ENCODE measurements at regions of chr5 and their contacts with region 1.

Region 1: GRCh38 chr5:97009212-97009898 is 73.5 kb downstream of the LNPEP start:
- DNase-seq: peak in 1 of 2 donors; percentile 9
- ATAC-seq: peak in 7 of 8 donors; percentile 52 to 76 (median 69)
- H3K4me3 ChIP-seq: no peak overlapping the region
- H3K27ac ChIP-seq: peak overlapping the region in 5 of 10 donors; percentile 2 to 35 (median 23)
- H3K4me1 ChIP-seq: peaks cover 0 to 19% (median 11%) of the 10 kb centered on the region in 9 donors
- H3K27me3 ChIP-seq: no peaks in the 10 kb centered on the region
- CTCF ChIP-seq: no peak

Region 2: GRCh38 chr5:96388176-96388575 is 621.2 kb before region 1 on chr5:
- intact Hi-C with region 1: loop called in 1 of 10 experiments (anchors 5 kb)
- DNase-seq: no peak
- ATAC-seq: no peak
- H3K4me3 ChIP-seq: no peak overlapping the region
- H3K27ac ChIP-seq: no peak overlapping the region
- H3K4me1 ChIP-seq: peaks cover 0 to 27% (median 0%) of the 10 kb centered on the region in 9 donors
- H3K27me3 ChIP-seq: no peaks in the 10 kb centered on the region
- CTCF ChIP-seq: no peak

Region 3: GRCh38 chr5:96868603-96869371 is 140.6 kb before region 1 on chr5:
- intact Hi-C with region 1: loop called in 2 of 10 experiments (anchors 10 kb)
- DNase-seq: peak in 1 of 2 donors; percentile 36
- ATAC-seq: peak; percentile 67 to 92 (median 87)
- H3K4me3 ChIP-seq: no peak overlapping the region
- H3K27ac ChIP-seq: no peak overlapping the region
- H3K4me1 ChIP-seq: no peaks in the 10 kb centered on the region
- H3K27me3 ChIP-seq: no peaks in the 10 kb centered on the region
- CTCF ChIP-seq: peak; percentile 75 to 95 (median 86)

Region 4: DNA sequence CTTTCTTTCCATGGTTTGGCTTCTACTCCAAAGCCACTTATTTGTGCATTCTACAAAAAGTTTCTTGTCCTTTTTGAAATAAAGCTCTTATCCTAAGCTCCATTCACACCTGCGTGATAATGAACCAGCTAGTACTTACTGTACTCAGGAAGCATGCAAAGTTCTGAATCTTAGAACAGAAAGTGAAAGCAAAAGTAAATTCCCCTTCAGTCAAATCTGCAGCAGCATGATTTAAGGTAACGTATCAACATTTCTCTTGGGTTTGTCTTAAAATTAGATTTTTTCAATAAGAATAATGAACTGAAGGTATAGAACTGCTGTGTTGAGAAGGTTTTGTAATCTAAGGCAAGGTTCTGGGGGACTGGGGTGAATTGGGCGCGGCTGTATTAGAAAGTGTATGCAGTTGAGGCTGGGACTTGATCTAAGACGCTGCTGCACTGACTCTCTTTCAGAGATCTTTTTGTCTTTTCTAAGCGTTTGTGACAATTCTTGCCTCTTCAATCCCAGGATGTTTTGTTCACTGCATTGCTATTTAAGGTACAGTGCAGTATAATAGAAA is 133.0 kb before region 1 on chr5 and contains the start of gene ERAP2:
- intact Hi-C with region 1: loop called in 1 of 10 experiments (anchors 10 kb)
- DNase-seq: no peak
- ATAC-seq: peak in 7 of 8 donors; percentile 67 to 88 (median 81)
- H3K4me3 ChIP-seq: peak within 1 kb of the TSS; percentile 34 to 78 (median 67)
- H3K27ac ChIP-seq: peak within 1 kb of the TSS in 9 of 10 donors; percentile 57 to 90 (median 79)
- H3K4me1 ChIP-seq: peaks cover 0 to 49% (median 10%) of the 10 kb centered on the region in 9 donors
- H3K27me3 ChIP-seq: no peaks in the 10 kb centered on the region
- CTCF ChIP-seq: no peak
- total RNA-seq, gene ERAP2: 0.92 to 29.7 (median 5.9) TPM

Region 5: GRCh38 chr5:97131139-97131710 is 121.9 kb after region 1 on chr5:
- intact Hi-C with region 1: loop called in 1 of 10 experiments (anchors 10 kb)
- DNase-seq: no peak
- ATAC-seq: no peak
- H3K4me3 ChIP-seq: no peak overlapping the region
- H3K27ac ChIP-seq: no peak overlapping the region
- H3K4me1 ChIP-seq: peaks cover 0 to 25% (median 8%) of the 10 kb centered on the region in 9 donors
- H3K27me3 ChIP-seq: no peaks in the 10 kb centered on the region
- CTCF ChIP-seq: no peak